Activated T-helper 1 cell treated with anti-CD3 and anti-CD28 coated beads, Interleukin-12 subunit alpha, Interleukin-12 subunit beta, Interleukin-2, Interleukin-4 antibody, amounts not matched to agents 30 ng/mL and 10 ng/mL and 1 ng/mL, durations not matched to agents 14 hours and 24 hours and 36 hours (primary cell): ENCODE measurements at regions of chr4 and their contacts with region 1.

Region 1: GRCh38 chr4:37561803-37562207 is 124.4 kb downstream of the RELL1 start:
- DNase-seq: no peak
- H3K4me3 Mint-ChIP-seq: no peak overlapping the region
- H3K27ac Mint-ChIP-seq: no peak overlapping the region
- H3K4me1 Mint-ChIP-seq: no peaks in the 10 kb centered on the region
- H3K27me3 Mint-ChIP-seq: peaks cover 4% of the 10 kb centered on the region

Region 2: DNA sequence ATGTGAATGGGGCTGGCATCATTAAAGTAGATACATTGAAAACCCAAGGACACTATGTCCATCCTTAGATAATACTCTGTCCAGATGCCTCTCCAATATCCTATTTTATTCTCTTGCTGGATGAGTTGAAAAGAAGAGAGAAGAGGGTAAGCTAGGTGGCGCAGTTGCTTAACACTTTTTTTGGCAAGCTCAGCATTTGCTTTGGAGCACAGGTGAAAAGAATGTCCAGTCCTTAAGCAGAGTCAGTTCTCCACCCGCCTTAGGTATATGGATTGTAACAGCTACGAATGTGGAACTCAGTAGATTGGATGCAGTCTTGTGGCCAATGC is 108.9 kb before region 1 on chr4:
- intact Hi-C with region 1: loop called (anchors 1 kb)
- DNase-seq: peak; percentile 19
- H3K4me3 Mint-ChIP-seq: peak overlapping the region; percentile 72
- H3K27ac Mint-ChIP-seq: no peak overlapping the region
- H3K4me1 Mint-ChIP-seq: peaks cover 15% of the 10 kb centered on the region
- H3K27me3 Mint-ChIP-seq: peaks cover 50% of the 10 kb centered on the region

Region 3: GRCh38 chr4:37648096-37648817 is 86.5 kb after region 1 on chr4:
- intact Hi-C with region 1: no loop called
- DNase-seq: no peak
- H3K4me3 Mint-ChIP-seq: no peak overlapping the region
- H3K27ac Mint-ChIP-seq: no peak overlapping the region
- H3K4me1 Mint-ChIP-seq: peaks cover 42% of the 10 kb centered on the region
- H3K27me3 Mint-ChIP-seq: no peaks in the 10 kb centered on the region